Mammary epithelial cell (primary cell): ENCODE measurements at regions of chr18 and their contacts with region 1.

Region 1: GRCh38 chr18:33839441-33840211 is 261.6 kb downstream of the ASXL3 start:
- DNase-seq: peak; percentile 39
- H3K4me3 ChIP-seq: no peak overlapping the region
- H3K27ac ChIP-seq: no peak overlapping the region
- H3K4me1 ChIP-seq: no peaks in the 10 kb centered on the region
- H3K27me3 ChIP-seq: no peaks in the 10 kb centered on the region
- CTCF ChIP-seq: peak; percentile 85 to 86

Region 2: DNA sequence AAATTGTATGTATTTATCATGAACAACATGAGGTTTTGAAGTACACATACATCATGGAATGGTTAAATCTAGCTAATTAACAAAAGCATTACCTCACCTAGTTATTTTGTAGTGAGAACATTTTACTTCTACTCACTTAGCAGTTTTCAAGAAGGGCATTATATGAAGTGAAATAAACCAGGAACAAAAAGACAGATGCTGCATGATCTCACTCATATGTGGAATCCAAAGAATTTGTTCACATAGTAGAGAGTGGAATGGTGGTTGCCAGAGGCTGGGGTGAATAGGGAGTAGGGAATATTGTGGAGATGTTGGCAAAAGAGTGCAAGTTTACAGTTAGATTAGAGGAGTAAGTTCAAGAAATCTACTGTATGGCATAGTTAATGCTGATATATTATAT is 30.4 kb after region 1 on chr18:
- CTCF ChIA-PET with region 1: interaction called, 11 read pairs
- dilution Hi-C with region 1: no loop called
- in situ Hi-C with region 1: no loop called
- intact Hi-C with region 1: no loop called
- DNase-seq: no peak
- H3K4me3 ChIP-seq: no peak overlapping the region
- H3K27ac ChIP-seq: no peak overlapping the region
- H3K4me1 ChIP-seq: no peaks in the 10 kb centered on the region
- H3K27me3 ChIP-seq: no peaks in the 10 kb centered on the region
- CTCF ChIP-seq: no peak

Region 3: GRCh38 chr18:34077599-34077998 is 238.0 kb after region 1 on chr18:
- CTCF ChIA-PET with region 1: interaction called, 4 read pairs
- dilution Hi-C with region 1: no loop called
- in situ Hi-C with region 1: no loop called
- intact Hi-C with region 1: loop called (anchors 5 kb)
- DNase-seq: no peak
- H3K4me3 ChIP-seq: no peak overlapping the region
- H3K27ac ChIP-seq: no peak overlapping the region
- H3K4me1 ChIP-seq: no peaks in the 10 kb centered on the region
- H3K27me3 ChIP-seq: peaks cover 2% of the 10 kb centered on the region
- CTCF ChIP-seq: peak in 1 of 2 donors; percentile 28

Region 4: DNA sequence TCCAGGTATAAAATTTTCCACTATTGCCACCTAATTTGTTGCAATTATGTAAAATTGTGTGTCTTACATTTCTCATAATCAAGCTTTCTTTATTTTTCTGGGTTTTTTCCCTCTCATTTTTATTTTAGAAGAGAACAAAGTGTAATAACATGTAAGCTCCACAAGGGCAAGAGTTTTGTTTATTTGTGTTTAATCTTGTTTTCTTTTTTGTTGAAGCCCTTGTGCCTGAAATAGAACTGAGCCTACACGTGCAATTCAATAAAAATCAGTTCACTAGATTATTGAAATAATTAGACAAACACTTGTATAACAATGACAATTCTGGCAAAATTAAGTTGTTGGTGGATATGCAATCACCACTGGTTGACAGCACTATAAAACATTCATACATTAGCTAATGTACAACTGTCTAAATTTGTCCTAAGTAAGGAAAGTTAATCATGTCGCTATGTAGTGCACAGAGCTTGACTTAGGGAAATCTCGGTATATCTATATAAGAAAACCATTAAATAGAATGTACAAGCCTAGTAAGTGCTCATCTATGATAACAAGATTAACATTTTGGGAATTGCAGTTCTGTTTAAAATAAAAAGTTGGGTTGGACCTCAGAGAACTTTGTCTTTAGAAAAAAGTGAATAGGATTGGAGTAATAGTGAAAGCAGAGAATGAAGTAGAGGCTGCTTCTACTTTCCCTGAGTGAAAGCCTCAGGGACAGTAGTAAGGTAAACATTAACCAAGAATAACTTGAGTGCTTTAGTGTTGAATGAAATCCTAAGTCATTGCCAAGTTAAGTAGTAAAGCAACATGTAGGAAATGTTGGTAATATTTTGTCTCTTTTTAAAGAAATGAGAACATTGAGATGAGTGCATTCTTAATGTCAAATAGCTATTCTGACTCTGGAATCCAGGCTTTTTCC is 422.5 kb after region 1 on chr18:
- CTCF ChIA-PET with region 1: no interaction called
- dilution Hi-C with region 1: no loop called
- in situ Hi-C with region 1: no loop called
- intact Hi-C with region 1: no loop called
- DNase-seq: no peak
- H3K4me3 ChIP-seq: no peak overlapping the region
- H3K27ac ChIP-seq: no peak overlapping the region
- H3K4me1 ChIP-seq: no peaks in the 10 kb centered on the region
- H3K27me3 ChIP-seq: no peaks in the 10 kb centered on the region
- CTCF ChIP-seq: no peak